ENCODE measurements at regions of chr10 and their contacts with region 1.

Region 1: GRCh38 chr10:68331455-68332258 is at the start of gene HNRNPH3:
- DNase-seq: peak; percentile 85 to 98
- H3K4me3 ChIP-seq: peak within 1 kb of the TSS; percentile 94 to 98
- H3K27ac ChIP-seq: peak within 1 kb of the TSS; percentile 100
- H3K4me1 ChIP-seq: peaks cover 4 to 5% of the 10 kb centered on the region in 2 donors
- H3K27me3 ChIP-seq: no peaks in the 10 kb centered on the region
- CTCF ChIP-seq: no peak
- total RNA-seq, gene HNRNPH3: 12.6 TPM

Region 2: GRCh38 chr10:67849331-67850011 is 482.2 kb before region 1 on chr10:
- intact Hi-C with region 1: loop called (anchors 5 kb)
- DNase-seq: peak; percentile 78 to 98
- H3K4me3 ChIP-seq: peak overlapping the region; percentile 77 to 87
- H3K27ac ChIP-seq: peak overlapping the region; percentile 92 to 94
- H3K4me1 ChIP-seq: peaks cover 3 to 5% of the 10 kb centered on the region in 2 donors
- H3K27me3 ChIP-seq: no peaks in the 10 kb centered on the region
- CTCF ChIP-seq: no peak

Region 3: GRCh38 chr10:68074775-68075549 is 256.7 kb before region 1 on chr10 and contains the start of gene HERC4:
- intact Hi-C with region 1: loop called (anchors 2 kb)
- DNase-seq: peak; percentile 72 to 97
- H3K4me3 ChIP-seq: peak within 1 kb of the TSS; percentile 87 to 99
- H3K27ac ChIP-seq: peak within 1 kb of the TSS; percentile 99 to 100
- H3K4me1 ChIP-seq: peaks cover 0 to 6% of the 10 kb centered on the region in 2 donors
- H3K27me3 ChIP-seq: no peaks in the 10 kb centered on the region
- CTCF ChIP-seq: no peak
- total RNA-seq, gene HERC4: 15.0 TPM

Region 4: DNA sequence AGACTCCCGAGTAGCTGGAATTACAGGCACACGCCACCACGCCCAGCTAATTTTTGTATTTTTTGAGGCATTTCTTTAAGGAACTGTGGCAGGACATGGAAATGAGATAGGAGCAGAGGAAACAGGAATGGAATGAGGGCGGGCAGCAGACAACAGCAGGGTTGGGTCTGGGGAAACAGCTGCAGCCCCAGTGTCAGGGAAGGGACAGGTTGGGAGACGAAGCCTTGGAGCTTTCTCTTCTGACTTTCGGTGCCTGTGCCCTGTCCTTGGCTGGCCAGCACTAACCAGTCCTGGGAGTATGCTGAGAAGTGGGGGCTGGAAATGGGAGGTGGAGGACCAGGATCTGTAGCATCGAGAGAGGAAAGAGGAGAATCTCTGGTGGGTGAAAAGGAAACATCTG is 147.1 kb before region 1 on chr10:
- intact Hi-C with region 1: no loop called
- DNase-seq: no peak
- H3K4me3 ChIP-seq: no peak overlapping the region
- H3K27ac ChIP-seq: no peak overlapping the region
- H3K4me1 ChIP-seq: no peaks in the 10 kb centered on the region
- H3K27me3 ChIP-seq: no peaks in the 10 kb centered on the region
- CTCF ChIP-seq: no peak

Region 5: GRCh38 chr10:68406815-68407548 is 75.3 kb after region 1 on chr10 and contains the start of gene RUFY2:
- intact Hi-C with region 1: loop called (anchors 2 kb)
- DNase-seq: peak; percentile 19 to 86
- H3K4me3 ChIP-seq: peak within 1 kb of the TSS; percentile 86 to 89
- H3K27ac ChIP-seq: peak within 1 kb of the TSS; percentile 91 to 92
- H3K4me1 ChIP-seq: no peaks in the 10 kb centered on the region
- H3K27me3 ChIP-seq: no peaks in the 10 kb centered on the region
- CTCF ChIP-seq: peak in 2 of 3 experiments; percentile 52 to 99
- total RNA-seq, gene RUFY2: 7.5 TPM

Measured in ascending aorta (tissue), 2 donors.